Mammary epithelial cell (primary cell): ENCODE measurements at regions of chr15 and their contacts with region 1.

Region 1: DNA sequence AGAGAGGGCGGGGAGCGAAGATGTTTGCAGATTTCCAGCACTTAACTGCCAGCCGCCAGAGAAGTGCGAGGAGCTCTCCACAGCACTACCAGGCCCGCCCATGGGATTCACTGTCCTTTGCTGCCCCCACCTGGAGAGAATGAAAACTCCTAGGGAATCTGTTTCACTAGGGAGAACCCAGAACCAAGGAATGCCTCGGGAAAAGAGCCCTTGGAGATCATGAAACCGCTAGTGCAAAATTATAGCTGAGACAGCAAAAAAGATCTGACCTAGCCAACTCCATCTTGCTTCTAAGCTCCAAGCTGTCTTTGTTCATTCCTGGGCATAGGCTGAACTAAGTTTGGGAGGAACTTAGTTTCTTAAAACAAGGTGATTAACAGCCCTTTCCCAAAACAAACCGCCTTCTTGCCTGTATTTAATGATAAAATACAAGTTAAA is 82.6 kb upstream of the GCNT3 start:
- DNase-seq: peak; percentile 83
- H3K4me3 ChIP-seq: no peak overlapping the region
- H3K27ac ChIP-seq: no peak overlapping the region
- H3K4me1 ChIP-seq: no peaks in the 10 kb centered on the region
- H3K27me3 ChIP-seq: no peaks in the 10 kb centered on the region
- CTCF ChIP-seq: peak; percentile 68 to 84

Region 2: GRCh38 chr15:58957101-58957973 is 571.6 kb before region 1 on chr15:
- CTCF ChIA-PET with region 1: interaction called, 3 read pairs
- dilution Hi-C with region 1: no loop called
- in situ Hi-C with region 1: no loop called
- intact Hi-C with region 1: loop called (anchors 1 kb)
- DNase-seq: peak; percentile 44
- H3K4me3 ChIP-seq: no peak overlapping the region
- H3K27ac ChIP-seq: no peak overlapping the region
- H3K4me1 ChIP-seq: peaks cover 8% of the 10 kb centered on the region
- H3K27me3 ChIP-seq: no peaks in the 10 kb centered on the region
- CTCF ChIP-seq: peak; percentile 78 to 88

Region 3: GRCh38 chr15:59562448-59563186 is 33.6 kb after region 1 on chr15:
- CTCF ChIA-PET with region 1: no interaction called
- dilution Hi-C with region 1: no loop called
- in situ Hi-C with region 1: no loop called
- intact Hi-C with region 1: loop called (anchors 1 kb)
- DNase-seq: no peak
- H3K4me3 ChIP-seq: no peak overlapping the region
- H3K27ac ChIP-seq: no peak overlapping the region
- H3K4me1 ChIP-seq: no peaks in the 10 kb centered on the region
- H3K27me3 ChIP-seq: no peaks in the 10 kb centered on the region
- CTCF ChIP-seq: peak; percentile 15 to 30

Region 4: GRCh38 chr15:59622289-59622688 is 93.3 kb after region 1 on chr15:
- CTCF ChIA-PET with region 1: interaction called, 6 read pairs
- dilution Hi-C with region 1: no loop called
- in situ Hi-C with region 1: loop called (anchors 10 kb)
- intact Hi-C with region 1: loop called (anchors 1 kb)
- DNase-seq: peak; percentile 66
- H3K4me3 ChIP-seq: no peak overlapping the region
- H3K27ac ChIP-seq: no peak overlapping the region
- H3K4me1 ChIP-seq: peaks cover 7% of the 10 kb centered on the region
- H3K27me3 ChIP-seq: no peaks in the 10 kb centered on the region
- CTCF ChIP-seq: peak; percentile 29 to 56

Region 5: DNA sequence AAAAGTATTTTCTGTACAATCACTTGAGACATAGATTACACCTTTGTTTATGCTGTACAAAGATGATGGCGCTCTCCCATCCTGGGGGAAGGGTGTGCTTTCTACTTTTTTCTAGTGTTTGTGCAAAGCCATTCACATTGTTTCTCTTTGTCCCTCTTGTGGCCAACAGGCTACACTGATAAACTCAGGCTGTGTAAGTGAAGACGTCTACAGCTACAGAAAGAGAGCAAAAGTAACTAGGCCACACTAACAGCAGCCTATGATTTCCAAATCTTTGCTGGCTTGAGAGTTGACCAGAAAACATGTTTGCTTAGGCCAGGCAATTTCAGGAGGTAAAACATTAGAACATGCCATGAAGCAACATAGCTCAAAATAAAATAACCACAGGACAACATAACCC is 550.2 kb after region 1 on chr15:
- CTCF ChIA-PET with region 1: no interaction called
- dilution Hi-C with region 1: no loop called
- in situ Hi-C with region 1: no loop called
- intact Hi-C with region 1: no loop called
- DNase-seq: no peak
- H3K4me3 ChIP-seq: no peak overlapping the region
- H3K27ac ChIP-seq: no peak overlapping the region
- H3K4me1 ChIP-seq: no peaks in the 10 kb centered on the region
- H3K27me3 ChIP-seq: no peaks in the 10 kb centered on the region
- CTCF ChIP-seq: peak; percentile 42 to 43